B cell (primary cell): ENCODE measurements at regions of chr17 and their contacts with region 1.

Region 1: GRCh38 chr17:17752089-17752820 is 71.0 kb downstream of the RAI1 start:
- DNase-seq: peak; percentile 95
- ATAC-seq: peak; percentile 85
- H3K4me3 ChIP-seq: peak overlapping the region; percentile 47 to 81 (median 71)
- H3K4me3 Mint-ChIP-seq: peak overlapping the region; percentile 91
- H3K27ac ChIP-seq: peak overlapping the region; percentile 89 to 93
- H3K27ac Mint-ChIP-seq: peak overlapping the region; percentile 96
- H3K4me1 ChIP-seq: peaks cover 75 to 88% of the 10 kb centered on the region in 2 donors
- H3K4me1 Mint-ChIP-seq: peaks cover 77% of the 10 kb centered on the region
- H3K27me3 ChIP-seq: no peaks in the 10 kb centered on the region
- H3K27me3 Mint-ChIP-seq: no peaks in the 10 kb centered on the region
- CTCF ChIP-seq: peak; percentile 43

Region 2: DNA sequence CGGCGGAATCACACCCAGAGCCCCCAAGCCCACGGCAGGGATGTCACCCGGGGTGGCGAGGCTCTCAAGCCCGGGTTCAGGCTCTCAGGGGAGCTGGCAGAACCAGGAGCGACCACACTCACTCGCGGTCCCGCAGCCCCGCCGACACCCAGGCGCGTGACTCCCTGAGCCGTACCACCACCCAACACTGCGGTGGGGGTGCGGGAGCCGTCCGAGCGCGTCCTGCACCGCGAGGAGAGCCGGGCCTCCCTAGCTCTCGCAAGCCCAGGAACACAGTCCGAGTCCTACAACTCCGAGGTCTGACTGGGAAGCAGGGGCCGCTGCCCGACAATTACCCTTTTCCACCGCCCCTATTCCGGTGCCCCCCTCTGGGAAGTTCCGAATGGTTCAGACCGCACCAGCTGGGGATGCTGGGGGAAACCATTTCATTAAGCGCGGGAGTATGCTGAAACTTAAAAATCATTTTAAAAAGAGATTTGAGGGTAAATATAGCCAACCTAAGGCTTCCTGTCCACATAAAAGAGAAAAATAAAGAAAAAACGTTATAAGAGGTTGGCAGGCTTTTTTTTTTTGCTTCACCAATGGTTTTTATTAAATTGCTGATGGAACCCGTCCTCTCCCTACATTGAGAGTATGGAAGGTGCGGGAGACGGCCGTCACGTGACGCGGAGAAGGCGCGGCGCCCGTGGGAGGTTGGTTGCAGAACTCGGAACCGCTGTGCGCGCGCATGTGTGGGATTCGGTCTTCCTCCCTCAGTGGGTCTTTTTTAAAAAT is 515.0 kb before region 1 on chr17 and contains the start of gene FLCN:
- CTCF ChIA-PET with region 1: no interaction called
- POLR2A ChIA-PET with region 1: no interaction called
- intact Hi-C with region 1: loop called (anchors 2 kb)
- DNase-seq: peak; percentile 98
- ATAC-seq: peak; percentile 89
- H3K4me3 ChIP-seq: peak within 1 kb of the TSS; percentile 83 to 96 (median 91)
- H3K4me3 Mint-ChIP-seq: peak within 1 kb of the TSS; percentile 91
- H3K27ac ChIP-seq: peak within 1 kb of the TSS; percentile 95 to 100
- H3K27ac Mint-ChIP-seq: peak within 1 kb of the TSS; percentile 99
- H3K4me1 ChIP-seq: peaks cover 9 to 21% of the 10 kb centered on the region in 2 donors
- H3K4me1 Mint-ChIP-seq: peaks cover 24% of the 10 kb centered on the region
- H3K27me3 ChIP-seq: no peaks in the 10 kb centered on the region
- H3K27me3 Mint-ChIP-seq: no peaks in the 10 kb centered on the region
- CTCF ChIP-seq: no peak
- total RNA-seq, gene FLCN: 128 and 144 TPM in 2 replicates

Region 3: DNA sequence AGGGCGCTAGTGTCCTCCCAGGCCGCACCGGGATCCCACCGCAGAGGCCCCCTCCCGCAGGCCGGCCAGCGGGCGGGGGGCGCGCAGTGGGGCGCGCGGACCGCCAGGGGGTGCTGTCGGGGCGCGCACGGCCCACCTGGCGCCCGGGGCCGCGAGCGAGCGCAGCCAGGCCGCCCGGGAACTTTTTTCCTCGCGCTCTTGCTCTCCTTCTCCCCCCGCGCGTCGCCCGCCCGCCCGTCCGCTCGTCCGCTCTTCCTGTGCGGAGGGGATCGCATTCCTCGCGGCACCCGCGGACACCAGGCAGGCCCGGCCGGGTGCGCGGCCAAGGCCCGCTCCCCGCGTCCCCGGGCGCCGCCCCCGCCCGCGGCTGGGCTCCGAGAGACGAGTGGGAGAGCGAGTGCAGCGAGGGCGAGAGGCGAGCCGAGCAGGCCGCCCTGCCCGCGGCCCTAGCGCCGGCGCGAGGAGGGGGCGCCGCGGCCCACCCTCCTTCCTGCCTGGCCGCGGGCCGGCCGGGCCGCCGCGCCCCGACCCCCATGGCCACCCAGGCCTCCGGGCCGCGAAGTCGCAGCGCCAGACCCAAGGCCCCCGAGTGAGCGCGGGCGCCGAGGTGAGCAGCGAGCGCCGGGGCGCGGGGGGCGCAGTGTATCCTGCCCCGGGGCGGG is 70.9 kb before region 1 on chr17 and contains the start of gene RAI1:
- CTCF ChIA-PET with region 1: interaction called, 5 read pairs
- POLR2A ChIA-PET with region 1: interaction called, 4 read pairs
- intact Hi-C with region 1: loop called (anchors 1 kb)
- DNase-seq: peak; percentile 90
- ATAC-seq: peak; percentile 64
- H3K4me3 ChIP-seq: peak within 1 kb of the TSS in 4 of 5 experiments; percentile 66 to 86 (median 72)
- H3K4me3 Mint-ChIP-seq: peak within 1 kb of the TSS; percentile 91
- H3K27ac ChIP-seq: peak within 1 kb of the TSS; percentile 86 to 97
- H3K27ac Mint-ChIP-seq: peak within 1 kb of the TSS; percentile 88
- H3K4me1 ChIP-seq: peaks cover 7 to 19% of the 10 kb centered on the region in 2 donors
- H3K4me1 Mint-ChIP-seq: peaks cover 30% of the 10 kb centered on the region
- H3K27me3 ChIP-seq: peaks cover 0 to 3% (median 0%) of the 10 kb centered on the region in 4 experiments
- H3K27me3 Mint-ChIP-seq: peaks cover 5% of the 10 kb centered on the region
- CTCF ChIP-seq: peak; percentile 74
- total RNA-seq, gene RAI1: 33.6 and 34.0 TPM in 2 replicates

Region 4: GRCh38 chr17:17766077-17766743 is 14.0 kb after region 1 on chr17:
- CTCF ChIA-PET with region 1: interaction called, 4 read pairs
- POLR2A ChIA-PET with region 1: interaction called, 4 read pairs
- intact Hi-C with region 1: loop called (anchors 2 kb)
- DNase-seq: peak; percentile 79
- ATAC-seq: peak; percentile 88
- H3K4me3 ChIP-seq: peak overlapping the region in 1 of 5 experiments; percentile 10
- H3K4me3 Mint-ChIP-seq: peak overlapping the region; percentile 78
- H3K27ac ChIP-seq: peak overlapping the region; percentile 60 to 80
- H3K27ac Mint-ChIP-seq: peak overlapping the region; percentile 96
- H3K4me1 ChIP-seq: peaks cover 29 to 43% of the 10 kb centered on the region in 2 donors
- H3K4me1 Mint-ChIP-seq: peaks cover 36% of the 10 kb centered on the region
- H3K27me3 ChIP-seq: no peaks in the 10 kb centered on the region
- H3K27me3 Mint-ChIP-seq: no peaks in the 10 kb centered on the region
- CTCF ChIP-seq: no peak

Region 5: DNA sequence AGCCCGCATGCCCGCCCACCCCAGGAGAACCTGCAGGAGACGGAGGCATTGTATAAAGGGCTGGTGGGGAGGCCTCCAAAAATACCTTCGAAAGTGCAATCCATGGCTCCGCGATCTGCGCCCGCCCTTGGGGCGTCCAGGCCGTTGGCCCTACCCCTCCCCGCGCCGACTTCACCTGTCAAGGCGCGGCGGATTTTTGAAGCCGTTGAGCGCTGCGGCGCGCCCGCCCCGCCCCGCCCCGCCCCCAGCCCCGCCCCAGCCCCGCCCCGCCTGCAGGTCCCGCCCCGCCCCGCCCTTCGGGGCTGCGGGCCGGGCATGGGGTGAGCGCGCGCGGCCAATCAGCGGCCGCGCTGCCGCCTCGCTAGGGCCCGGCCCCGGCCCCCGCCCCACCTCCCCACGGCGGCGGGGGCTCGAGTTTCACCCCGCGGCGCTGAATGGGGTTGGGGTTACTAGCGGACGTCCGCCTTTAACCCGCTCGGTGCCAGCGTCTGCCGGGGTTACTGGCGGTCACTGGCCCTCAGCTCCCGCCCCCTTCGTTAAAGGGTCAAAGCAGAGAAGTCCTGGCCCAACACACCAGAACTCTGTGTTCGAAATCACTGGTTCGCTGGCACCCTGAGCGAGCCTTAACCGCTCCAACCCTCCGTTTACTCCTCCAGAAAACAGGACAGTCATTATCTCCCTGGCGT is 71.3 kb after region 1 on chr17:
- CTCF ChIA-PET with region 1: no interaction called
- POLR2A ChIA-PET with region 1: interaction called, 5 read pairs
- intact Hi-C with region 1: loop called (anchors 1 kb)
- DNase-seq: peak; percentile 86
- ATAC-seq: peak; percentile 93
- H3K4me3 ChIP-seq: peak overlapping the region; percentile 35 to 82 (median 56)
- H3K4me3 Mint-ChIP-seq: peak overlapping the region; percentile 86
- H3K27ac ChIP-seq: peak overlapping the region; percentile 16 to 56
- H3K27ac Mint-ChIP-seq: peak overlapping the region; percentile 67
- H3K4me1 ChIP-seq: peaks cover 28 to 41% of the 10 kb centered on the region in 2 donors
- H3K4me1 Mint-ChIP-seq: peaks cover 52% of the 10 kb centered on the region
- H3K27me3 ChIP-seq: no peaks in the 10 kb centered on the region
- H3K27me3 Mint-ChIP-seq: no peaks in the 10 kb centered on the region
- CTCF ChIP-seq: no peak

Region 6: DNA sequence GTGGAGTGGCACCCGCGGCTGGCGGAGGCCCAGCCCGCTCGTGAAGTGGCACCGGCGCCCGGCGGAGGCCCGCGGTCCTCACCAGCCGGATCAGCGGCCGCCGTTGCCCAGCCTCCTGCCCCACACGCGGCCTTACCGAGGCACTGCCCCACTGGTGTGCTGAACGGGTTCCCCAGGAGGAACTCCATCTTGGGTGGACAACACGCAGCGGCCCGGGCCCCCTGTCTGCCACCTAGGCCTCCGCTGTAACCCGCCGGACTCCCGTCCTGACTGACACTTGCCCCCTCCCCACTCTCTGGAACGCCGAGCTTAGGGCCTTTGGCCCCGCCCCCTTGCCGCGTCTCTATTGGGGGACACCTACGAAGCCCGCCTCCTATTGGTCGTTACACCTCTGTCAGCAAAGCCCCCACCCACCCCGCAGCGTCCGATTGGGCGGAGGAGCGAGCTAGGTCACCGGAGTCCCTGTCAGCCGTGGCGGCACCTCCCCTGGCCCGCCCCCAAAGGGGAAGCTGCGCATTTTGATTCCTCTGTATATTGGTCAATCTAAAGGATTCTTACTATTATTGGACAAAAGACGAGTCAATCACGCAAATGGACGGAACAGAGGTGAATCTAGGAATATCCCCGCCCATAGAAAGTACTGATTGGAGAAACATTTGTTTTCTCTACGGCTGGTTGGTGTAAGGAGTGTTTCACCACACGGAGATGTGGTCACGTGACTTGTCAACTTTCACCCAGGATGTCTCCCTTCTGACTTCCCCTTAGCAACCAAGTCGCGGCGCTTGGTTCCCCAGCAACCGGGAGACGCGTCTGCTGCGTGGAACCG is 220.1 kb after region 1 on chr17 and contains the starts of genes DRC3 and TOM1L2:
- CTCF ChIA-PET with region 1: no interaction called
- POLR2A ChIA-PET with region 1: no interaction called
- intact Hi-C with region 1: loop called (anchors 1 kb)
- DNase-seq: peak; percentile 100
- ATAC-seq: peak; percentile 90
- H3K4me3 ChIP-seq: peak within 1 kb of the TSS; percentile 41 to 82 (median 76)
- H3K4me3 Mint-ChIP-seq: peak within 1 kb of the TSS; percentile 97
- H3K27ac ChIP-seq: peak within 1 kb of the TSS; percentile 52 to 89
- H3K27ac Mint-ChIP-seq: peak within 1 kb of the TSS; percentile 96
- H3K4me1 ChIP-seq: peaks cover 12 to 17% of the 10 kb centered on the region in 2 donors
- H3K4me1 Mint-ChIP-seq: peaks cover 22% of the 10 kb centered on the region
- H3K27me3 ChIP-seq: no peaks in the 10 kb centered on the region
- H3K27me3 Mint-ChIP-seq: no peaks in the 10 kb centered on the region
- CTCF ChIP-seq: no peak
- total RNA-seq, gene DRC3: 0.17 TPM in 1 of 2 replicates, not detected in the other
- total RNA-seq, gene TOM1L2: 29.7 and 34.4 TPM in 2 replicates